ENCODE measurements at regions of chr3 and their contacts with region 1.

Region 1: DNA sequence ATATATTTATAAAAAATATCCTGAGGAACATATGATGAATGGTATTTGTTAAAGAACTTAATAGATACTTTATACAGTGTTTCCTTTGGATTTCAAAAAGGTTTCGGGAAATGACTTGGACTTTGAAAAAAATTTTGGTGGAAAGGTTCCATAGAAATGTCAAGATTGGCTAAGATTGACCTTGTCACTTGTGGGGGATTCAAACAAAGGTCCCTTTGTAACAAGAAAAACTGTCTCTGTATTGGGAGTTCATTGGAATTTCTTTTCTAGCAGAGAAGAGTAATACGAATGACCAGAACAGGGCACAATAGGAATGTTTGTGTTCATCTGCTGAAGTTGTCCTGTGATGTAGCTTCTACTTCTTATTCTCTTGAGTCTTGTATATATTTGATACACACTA is 43.2 kb downstream of the ARHGEF26 start:
- DNase-seq: peak; percentile 89
- ATAC-seq: peak; percentile 97
- H3K4me3 ChIP-seq: no peak overlapping the region; a peak in 1 of 6 replicates
- H3K27ac ChIP-seq: peak overlapping the region; percentile 57
- H3K4me1 ChIP-seq: peaks cover 54% of the 10 kb centered on the region
- H3K27me3 ChIP-seq: no peaks in the 10 kb centered on the region
- CTCF ChIP-seq: no peak
- EP300 ChIP-seq: peak in 1 of 2 experiments; percentile 72; a peak in 2 of 4 replicates
- POLR2A ChIP-seq: no peak
- RAD21 ChIP-seq: no peak

Region 2: GRCh38 chr3:154139996-154140436 is 24.4 kb before region 1 on chr3:
- CTCF ChIA-PET with region 1: no interaction called
- POLR2A ChIA-PET with region 1: no interaction called
- in situ Hi-C with region 1: no loop called
- intact Hi-C with region 1: loop called (anchors 1 kb)
- DNase-seq: peak; percentile 96
- ATAC-seq: peak; percentile 99
- H3K4me3 ChIP-seq: no peak overlapping the region; a peak in 1 of 6 replicates
- H3K27ac ChIP-seq: no peak overlapping the region
- H3K4me1 ChIP-seq: peaks cover 23% of the 10 kb centered on the region
- H3K27me3 ChIP-seq: 0 out of 5 replicates have a peak, but pooled peaks cover 0 to 4% of the 10 kb centered on the region in 2 experiments
- CTCF ChIP-seq: no peak
- EP300 ChIP-seq: peak; percentile 29 to 87; a peak in 3 of 4 replicates
- POLR2A ChIP-seq: no peak
- RAD21 ChIP-seq: no peak

Region 3: GRCh38 chr3:154151969-154152368 is 12.4 kb before region 1 on chr3:
- CTCF ChIA-PET with region 1: no interaction called
- POLR2A ChIA-PET with region 1: no interaction called
- in situ Hi-C with region 1: no loop called
- intact Hi-C with region 1: no loop called
- DNase-seq: no peak
- ATAC-seq: no peak
- H3K4me3 ChIP-seq: no peak overlapping the region
- H3K27ac ChIP-seq: no peak overlapping the region
- H3K4me1 ChIP-seq: no peaks in the 10 kb centered on the region
- H3K27me3 ChIP-seq: no peaks in the 10 kb centered on the region
- CTCF ChIP-seq: no peak
- EP300 ChIP-seq: no peak
- POLR2A ChIP-seq: no peak
- RAD21 ChIP-seq: no peak

Region 4: GRCh38 chr3:154235330-154235729 is 70.9 kb after region 1 on chr3:
- CTCF ChIA-PET with region 1: no interaction called
- POLR2A ChIA-PET with region 1: no interaction called
- in situ Hi-C with region 1: no loop called
- intact Hi-C with region 1: no loop called
- DNase-seq: no peak
- ATAC-seq: no peak
- H3K4me3 ChIP-seq: no peak overlapping the region
- H3K27ac ChIP-seq: no peak overlapping the region
- H3K4me1 ChIP-seq: no peaks in the 10 kb centered on the region
- H3K27me3 ChIP-seq: no peaks in the 10 kb centered on the region
- CTCF ChIP-seq: no peak
- EP300 ChIP-seq: no peak
- POLR2A ChIP-seq: no peak
- RAD21 ChIP-seq: no peak